A549 (cell line): ENCODE measurements at regions of chr1 and their contacts with region 1.

Region 1: GRCh38 chr1:206982216-206982615 is 12.0 kb upstream of the FCAMR start:
- DNase-seq: peak; percentile 57 to 73
- ATAC-seq: peak; percentile 96 to 97
- H3K4me3 ChIP-seq: no peak overlapping the region
- H3K27ac ChIP-seq: no peak overlapping the region
- H3K4me1 ChIP-seq: no peaks in the 10 kb centered on the region; the same call in 2 of the 3 replicates
- CTCF ChIP-seq: peak; percentile 92
- EP300 ChIP-seq: no peak
- POLR2A ChIP-seq: no peak
- RAD21 ChIP-seq: peak; percentile 92

Region 2: GRCh38 chr1:206461602-206462455 is 520.4 kb before region 1 on chr1:
- CTCF ChIA-PET with region 1: interaction called, 10 read pairs
- POLR2A ChIA-PET with region 1: no interaction called
- DNase-seq: peak; percentile 66 to 77
- ATAC-seq: peak; percentile 72 to 91
- H3K4me3 ChIP-seq: no peak overlapping the region
- H3K27ac ChIP-seq: no peak overlapping the region
- H3K4me1 ChIP-seq: peaks cover 12% of the 10 kb centered on the region; the same call in 2 of the 3 replicates
- CTCF ChIP-seq: peak; percentile 78
- EP300 ChIP-seq: no peak
- POLR2A ChIP-seq: no peak
- RAD21 ChIP-seq: peak; percentile 45 to 58

Region 3: GRCh38 chr1:206544562-206545257 is 437.5 kb before region 1 on chr1:
- CTCF ChIA-PET with region 1: interaction called, 10 read pairs
- POLR2A ChIA-PET with region 1: no interaction called
- DNase-seq: peak; percentile 57 to 79
- ATAC-seq: peak; percentile 92 to 96
- H3K4me3 ChIP-seq: no peak overlapping the region
- H3K27ac ChIP-seq: no peak overlapping the region
- H3K4me1 ChIP-seq: no peaks in the 10 kb centered on the region
- CTCF ChIP-seq: peak; percentile 85
- EP300 ChIP-seq: no peak
- POLR2A ChIP-seq: no peak
- RAD21 ChIP-seq: peak; percentile 64 to 72

Region 4: DNA sequence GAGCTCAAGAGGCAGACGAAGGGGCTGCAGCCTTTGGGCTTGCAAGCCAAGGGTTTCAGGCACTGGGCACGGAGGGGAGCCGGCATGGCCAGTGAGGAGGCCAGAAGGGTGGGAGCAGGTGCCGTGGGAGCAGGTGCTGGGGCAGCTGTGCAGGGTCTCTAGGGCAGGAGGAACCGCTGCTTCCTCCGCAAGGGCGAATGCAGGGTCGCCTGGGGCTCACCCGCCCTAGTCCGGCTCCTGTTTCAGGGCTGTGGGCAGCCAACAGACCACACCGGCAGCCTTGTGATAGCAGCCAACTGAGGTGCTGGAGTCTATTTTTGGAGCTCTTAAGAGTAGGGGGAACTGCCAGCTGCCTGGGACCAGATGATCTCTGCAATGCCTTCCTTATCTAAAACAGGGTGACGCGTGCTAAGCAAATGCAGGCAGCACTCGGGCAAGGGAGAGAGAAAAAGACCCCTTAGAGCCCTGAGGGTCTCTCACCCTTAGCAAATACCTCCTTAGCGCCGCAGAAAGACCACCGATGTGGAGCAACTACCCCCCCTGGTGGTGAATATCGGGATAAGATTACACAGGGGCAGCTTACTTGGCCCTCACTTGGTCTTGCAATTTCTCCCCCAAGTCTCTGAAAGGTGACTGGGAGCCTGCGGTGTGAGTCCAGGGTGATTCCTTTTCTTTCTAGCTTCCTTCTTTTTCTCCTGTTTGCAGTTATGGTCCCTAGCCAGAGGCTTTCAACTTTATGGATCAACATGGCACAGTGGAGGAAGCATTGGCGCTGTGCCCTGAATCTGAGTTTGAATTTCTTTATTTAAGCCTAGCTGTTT is 318.2 kb before region 1 on chr1:
- CTCF ChIA-PET with region 1: interaction called, 23 read pairs
- POLR2A ChIA-PET with region 1: no interaction called
- DNase-seq: peak; percentile 64 to 65
- ATAC-seq: peak; percentile 84 to 91
- H3K4me3 ChIP-seq: no peak overlapping the region
- H3K27ac ChIP-seq: peak overlapping the region in 1 of 2 experiments; percentile 37; a peak in 2 of 6 replicates
- H3K4me1 ChIP-seq: peaks cover 7% of the 10 kb centered on the region; the same call in 1 of the 3 replicates
- CTCF ChIP-seq: peak; percentile 86
- EP300 ChIP-seq: no peak
- POLR2A ChIP-seq: no peak
- RAD21 ChIP-seq: peak; percentile 82 to 87

Region 5: DNA sequence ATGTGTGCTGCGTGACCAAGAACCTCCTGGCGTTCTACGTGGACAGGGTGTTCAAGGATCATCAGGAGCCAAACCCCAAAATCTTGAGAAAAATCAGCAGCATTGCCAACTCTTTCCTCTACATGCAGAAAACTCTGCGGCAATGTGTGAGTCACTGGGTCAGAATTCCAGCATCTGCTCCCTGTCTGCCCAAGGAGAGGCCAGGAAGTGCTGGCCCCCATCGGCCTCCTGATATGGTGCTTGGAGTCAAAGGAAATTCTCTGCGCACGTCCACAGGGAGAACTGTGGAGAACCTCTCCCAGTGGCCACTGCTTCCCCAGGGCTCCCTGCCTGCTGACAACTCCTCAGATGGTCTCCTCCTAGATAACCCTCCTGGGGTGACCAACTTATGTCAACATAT is 142.4 kb before region 1 on chr1:
- CTCF ChIA-PET with region 1: no interaction called
- POLR2A ChIA-PET with region 1: no interaction called
- DNase-seq: peak in 1 of 2 experiments; percentile 7
- ATAC-seq: peak in 1 of 2 experiments; percentile 66; a peak in 3 of 6 replicates
- H3K4me3 ChIP-seq: no peak overlapping the region
- H3K27ac ChIP-seq: no peak overlapping the region
- H3K4me1 ChIP-seq: no peaks in the 10 kb centered on the region
- CTCF ChIP-seq: no peak
- EP300 ChIP-seq: no peak
- POLR2A ChIP-seq: no peak
- RAD21 ChIP-seq: no peak

Region 6: GRCh38 chr1:206912445-206913095 is 69.6 kb before region 1 on chr1:
- CTCF ChIA-PET with region 1: interaction called, 108 read pairs
- POLR2A ChIA-PET with region 1: interaction called, 3 read pairs
- DNase-seq: peak; percentile 77 to 87
- ATAC-seq: peak; percentile 58 to 71; a peak in 4 of 6 replicates
- H3K4me3 ChIP-seq: no peak overlapping the region
- H3K27ac ChIP-seq: no peak overlapping the region
- H3K4me1 ChIP-seq: peaks cover 4% of the 10 kb centered on the region; the same call in 1 of the 3 replicates
- CTCF ChIP-seq: peak; percentile 79
- EP300 ChIP-seq: no peak
- POLR2A ChIP-seq: no peak
- RAD21 ChIP-seq: peak; percentile 85 to 89

Region 7: DNA sequence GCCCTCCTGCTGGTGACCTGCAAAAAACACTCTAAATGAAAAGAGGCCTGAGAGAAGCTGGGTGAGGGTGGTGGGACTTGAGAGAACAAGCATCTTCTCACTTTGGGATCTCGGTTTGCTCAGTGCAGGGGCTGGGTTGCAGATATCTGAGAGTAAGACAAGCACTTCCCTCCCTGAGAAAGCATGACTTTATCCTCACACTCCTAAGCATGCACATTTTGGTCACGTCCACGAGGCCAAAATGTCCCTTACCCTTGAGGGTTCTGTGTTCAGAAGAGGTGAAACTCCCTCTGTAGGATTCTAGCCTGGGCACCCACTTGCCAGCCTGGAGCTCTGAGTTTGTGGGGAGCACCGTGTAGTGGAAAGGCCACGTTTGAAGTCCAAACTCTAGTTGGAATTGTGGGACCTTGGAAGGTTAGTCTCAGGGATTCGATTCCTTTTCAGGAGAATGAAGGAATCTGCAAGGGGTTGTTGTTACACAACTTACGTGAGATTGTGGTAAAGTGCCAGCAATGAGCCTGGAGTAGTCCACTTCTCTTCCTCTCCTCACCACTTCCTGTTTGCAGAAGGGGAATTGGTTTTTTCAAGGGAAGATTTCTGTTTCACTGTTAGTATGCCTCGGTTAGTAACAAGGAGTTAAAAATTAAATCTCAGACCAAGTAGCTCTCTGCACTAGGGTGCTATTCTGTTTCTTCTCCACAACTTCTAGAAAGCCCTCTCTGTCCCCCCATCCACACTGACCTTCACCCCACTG is 14.9 kb before region 1 on chr1:
- CTCF ChIA-PET with region 1: interaction called, 90 read pairs
- POLR2A ChIA-PET with region 1: no interaction called
- DNase-seq: no peak
- ATAC-seq: no peak
- H3K4me3 ChIP-seq: no peak overlapping the region
- H3K27ac ChIP-seq: no peak overlapping the region
- H3K4me1 ChIP-seq: no peaks in the 10 kb centered on the region
- CTCF ChIP-seq: no peak
- EP300 ChIP-seq: no peak
- POLR2A ChIP-seq: no peak
- RAD21 ChIP-seq: no peak

Region 8: DNA sequence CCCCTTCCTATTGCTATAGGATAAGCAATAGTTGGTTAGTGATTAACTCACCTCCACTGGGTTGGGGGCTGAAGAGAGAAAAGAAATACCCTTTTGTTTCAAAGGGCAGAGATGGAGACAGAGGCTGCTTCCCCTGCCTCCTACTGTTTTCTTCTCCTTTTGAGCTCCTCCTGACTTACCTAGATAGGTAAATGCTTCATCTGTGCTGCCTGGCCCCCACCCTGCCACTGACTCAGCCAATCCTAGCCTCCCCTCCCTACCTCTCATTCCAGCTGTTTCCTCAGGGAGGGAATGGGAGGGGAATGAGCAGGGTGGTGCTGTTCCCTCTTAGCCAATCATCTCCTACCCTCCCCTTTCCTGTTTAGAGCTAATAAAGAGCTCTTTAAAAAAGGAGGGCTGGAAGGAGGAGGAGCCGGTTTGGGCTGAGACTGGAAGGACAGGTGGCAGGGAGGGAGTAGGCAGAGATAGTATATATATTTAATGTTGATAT is 50.4 kb after region 1 on chr1 and contains the start of gene C1orf116:
- CTCF ChIA-PET with region 1: interaction called, 17 read pairs
- POLR2A ChIA-PET with region 1: no interaction called
- DNase-seq: peak; percentile 67 to 76
- ATAC-seq: peak; percentile 54 to 70; a peak in 4 of 6 replicates
- H3K4me3 ChIP-seq: peak within 1 kb of the TSS; percentile 33
- H3K27ac ChIP-seq: peak within 1 kb of the TSS; percentile 86 to 89
- H3K4me1 ChIP-seq: peaks cover 76% of the 10 kb centered on the region
- CTCF ChIP-seq: no peak
- EP300 ChIP-seq: no peak
- POLR2A ChIP-seq: no peak
- RAD21 ChIP-seq: no peak; a peak in 1 of 5 replicates
- polyA plus RNA-seq, gene C1orf116: 2.0 and 2.2 TPM in 2 replicates